PC-9 (cell line): ENCODE measurements at regions of chr10 and their contacts with region 1.

Region 1: DNA sequence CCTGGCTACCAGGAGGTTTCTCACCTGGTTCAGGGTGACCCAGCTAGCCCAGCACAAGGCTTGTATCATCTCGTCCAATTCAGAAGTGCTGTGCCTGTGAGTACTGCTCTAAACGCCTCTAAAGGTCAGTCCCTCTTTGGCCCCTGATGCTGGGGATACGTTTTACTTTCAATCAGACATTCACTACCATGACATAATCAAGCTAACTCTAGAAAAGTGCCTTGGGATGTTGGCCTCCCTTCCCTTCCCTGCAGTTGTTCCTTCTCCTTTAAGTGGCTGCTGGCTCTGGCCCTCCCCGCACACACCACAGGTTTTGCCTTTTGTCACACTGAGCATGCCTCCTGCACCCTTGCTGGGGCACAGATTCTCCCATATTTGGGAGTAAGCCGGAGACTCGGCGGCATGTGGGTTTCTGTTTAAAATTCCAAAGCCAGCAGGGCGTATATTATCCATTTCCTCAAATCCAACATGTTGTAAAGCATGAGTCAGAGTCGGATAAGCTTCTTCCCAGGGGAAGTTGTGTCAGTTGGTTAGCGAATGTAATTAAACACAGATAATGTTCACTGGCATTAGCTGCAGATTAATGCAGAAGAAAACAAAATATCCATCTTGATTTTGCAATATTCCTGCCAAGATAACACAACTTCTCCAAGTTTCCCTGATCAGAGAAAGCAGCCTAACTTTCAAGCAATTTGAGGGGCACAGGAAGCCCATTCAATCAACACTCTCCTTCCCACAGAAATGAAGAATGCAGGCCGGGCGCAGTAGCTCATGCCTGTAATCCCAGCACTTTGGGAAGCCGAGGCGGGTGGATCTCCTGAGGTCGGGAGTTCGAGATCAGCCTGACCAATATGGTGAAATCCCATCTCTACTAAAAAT is 31.8 kb upstream of the VCL start:
- DNase-seq: peak; percentile 93 to 99
- H3K4me3 ChIP-seq: peak overlapping the region; percentile 43; the same call in 1 of the 2 replicates
- H3K27ac ChIP-seq: peak overlapping the region; percentile 99
- H3K4me1 ChIP-seq: peaks cover 38% of the 10 kb centered on the region
- H3K27me3 ChIP-seq: no peaks in the 10 kb centered on the region
- CTCF ChIP-seq: no peak

Region 2: GRCh38 chr10:73891540-73891939 is 74.6 kb before region 1 on chr10:
- CTCF ChIA-PET with region 1: interaction called, 4 read pairs
- POLR2A ChIA-PET with region 1: interaction called, 16 read pairs
- intact Hi-C with region 1: loop called (anchors 2 kb)
- DNase-seq: no peak
- H3K4me3 ChIP-seq: no peak overlapping the region
- H3K27ac ChIP-seq: peak overlapping the region; percentile 97
- H3K4me1 ChIP-seq: peaks cover 100% of the 10 kb centered on the region
- H3K27me3 ChIP-seq: no peaks in the 10 kb centered on the region
- CTCF ChIP-seq: no peak

Region 3: DNA sequence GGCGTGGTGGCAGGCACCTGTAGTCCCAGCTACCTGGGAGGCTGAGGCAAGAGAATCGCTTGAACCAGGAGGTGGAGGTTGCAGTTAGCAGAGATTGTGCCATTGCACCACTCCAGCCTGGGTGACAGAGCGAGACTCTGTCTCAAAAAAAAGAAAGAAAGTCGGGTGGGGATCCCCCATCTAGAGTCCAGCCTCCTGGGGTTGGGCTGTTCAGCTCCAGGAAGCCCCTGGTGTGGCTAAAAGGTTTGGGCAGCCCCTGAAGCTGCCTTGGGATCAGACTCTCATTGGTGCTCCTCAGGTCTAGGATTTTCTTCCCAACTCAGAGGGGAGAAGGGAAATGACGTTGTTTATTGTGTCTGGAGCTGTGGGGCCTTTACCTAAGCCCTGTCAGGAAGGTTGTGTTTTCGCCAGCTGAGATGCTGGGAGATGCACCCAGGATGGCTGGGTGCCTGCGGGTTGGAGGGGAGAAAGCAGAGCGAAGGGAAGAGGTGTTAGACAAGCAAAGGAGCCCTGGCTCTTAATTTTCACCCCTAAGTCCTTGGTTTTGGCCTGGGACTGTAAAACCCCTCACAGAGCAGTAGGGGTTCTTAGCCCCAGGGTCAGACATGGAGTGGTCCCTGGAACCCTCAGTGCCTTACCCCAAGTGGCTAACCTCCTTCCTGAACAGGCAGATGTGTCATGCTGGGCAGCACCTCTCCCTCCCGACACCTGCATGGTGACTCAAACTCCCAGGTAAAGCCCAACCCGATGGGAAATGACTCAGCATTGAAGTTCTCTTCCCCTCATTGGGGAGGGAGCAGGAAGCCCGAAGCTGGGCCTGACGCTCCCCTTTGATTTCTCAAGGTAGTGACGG is 34.1 kb before region 1 on chr10:
- CTCF ChIA-PET with region 1: no interaction called
- POLR2A ChIA-PET with region 1: interaction called, 4 read pairs
- intact Hi-C with region 1: loop called (anchors 1 kb)
- DNase-seq: peak; percentile 93 to 99
- H3K4me3 ChIP-seq: peak overlapping the region; percentile 27; the same call in 1 of the 2 replicates
- H3K27ac ChIP-seq: peak overlapping the region; percentile 97
- H3K4me1 ChIP-seq: peaks cover 43% of the 10 kb centered on the region
- H3K27me3 ChIP-seq: no peaks in the 10 kb centered on the region
- CTCF ChIP-seq: no peak

Region 4: GRCh38 chr10:74058658-74059057 is 92.5 kb after region 1 on chr10:
- CTCF ChIA-PET with region 1: no interaction called
- POLR2A ChIA-PET with region 1: no interaction called
- intact Hi-C with region 1: loop called (anchors 1 kb)
- DNase-seq: no peak
- H3K4me3 ChIP-seq: no peak overlapping the region
- H3K27ac ChIP-seq: peak overlapping the region; percentile 92; the same call in 1 of the 2 replicates
- H3K4me1 ChIP-seq: peaks cover 50% of the 10 kb centered on the region
- H3K27me3 ChIP-seq: no peaks in the 10 kb centered on the region
- CTCF ChIP-seq: no peak; the same call in 1 of the 2 replicates